Heart right ventricle (tissue), 16 donors: ENCODE measurements at regions of chr7 and their contacts with region 1.

Region 1: DNA sequence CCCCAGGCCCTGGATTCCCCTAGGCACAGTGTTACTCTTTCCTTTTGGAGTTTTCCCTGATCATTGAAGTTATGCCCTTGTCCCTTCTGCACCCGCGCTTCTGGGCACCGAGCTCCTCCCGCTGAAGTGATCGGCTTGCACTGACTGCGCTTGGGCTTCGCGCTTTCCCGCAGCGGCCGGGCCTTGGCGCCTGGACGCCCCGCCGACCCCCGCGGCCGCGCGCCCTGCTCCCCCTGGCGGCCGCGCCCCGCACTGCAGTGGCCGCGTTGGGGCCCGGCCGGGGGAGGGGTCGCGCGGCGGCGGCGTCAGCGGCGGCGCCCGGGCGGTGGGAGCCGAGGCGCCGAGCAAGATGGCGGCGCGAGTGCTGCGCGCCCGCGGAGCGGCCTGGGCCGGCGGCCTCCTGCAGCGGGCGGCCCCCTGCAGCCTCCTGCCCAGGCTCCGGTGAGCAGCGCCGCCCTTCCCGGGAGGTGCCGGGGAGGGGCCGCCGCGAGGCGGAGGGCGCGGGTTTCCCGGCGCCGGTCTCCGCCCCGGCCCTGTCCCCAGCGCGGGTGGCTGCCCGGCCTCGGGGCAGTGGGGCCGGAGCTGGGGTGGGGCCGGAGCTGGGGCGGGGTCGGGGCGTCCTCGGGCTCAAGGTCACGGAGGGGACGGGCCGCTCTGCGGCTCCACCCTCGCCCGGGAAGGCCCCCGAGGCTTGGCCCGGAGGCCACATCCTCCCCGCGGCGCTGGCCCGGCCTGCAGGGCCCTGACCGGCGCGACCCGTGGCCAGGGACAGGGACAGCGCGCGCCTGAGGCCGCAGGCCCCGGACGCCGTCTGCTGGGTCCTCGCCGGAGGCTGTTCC is at the start of gene NIPSNAP2:
- DNase-seq: peak; percentile 86 to 91
- ATAC-seq: peak; percentile 93 to 96 (median 94)
- H3K4me3 ChIP-seq: peak within 1 kb of the TSS; percentile 26 to 80 (median 62)
- H3K27ac ChIP-seq: peak within 1 kb of the TSS; percentile 85 to 99 (median 98)
- H3K4me1 ChIP-seq: peaks cover 3 to 52% (median 28%) of the 10 kb centered on the region in 9 donors
- H3K27me3 ChIP-seq: no peaks in the 10 kb centered on the region
- CTCF ChIP-seq: peak; percentile 30 to 71 (median 55)
- total RNA-seq, gene NIPSNAP2: 221 to 455 (median 348) TPM

Region 2: GRCh38 chr7:55641273-55641691 is 323.2 kb before region 1 on chr7:
- intact Hi-C with region 1: loop called in 5 of 10 experiments (anchors 1 to 10 kb)
- DNase-seq: peak in 1 of 2 donors; percentile 51
- ATAC-seq: peak; percentile 75 to 96 (median 88)
- H3K4me3 ChIP-seq: no peak overlapping the region
- H3K27ac ChIP-seq: no peak overlapping the region
- H3K4me1 ChIP-seq: peaks cover 0 to 7% (median 0%) of the 10 kb centered on the region in 9 donors
- H3K27me3 ChIP-seq: no peaks in the 10 kb centered on the region
- CTCF ChIP-seq: peak; percentile 55 to 85 (median 80)

Region 3: DNA sequence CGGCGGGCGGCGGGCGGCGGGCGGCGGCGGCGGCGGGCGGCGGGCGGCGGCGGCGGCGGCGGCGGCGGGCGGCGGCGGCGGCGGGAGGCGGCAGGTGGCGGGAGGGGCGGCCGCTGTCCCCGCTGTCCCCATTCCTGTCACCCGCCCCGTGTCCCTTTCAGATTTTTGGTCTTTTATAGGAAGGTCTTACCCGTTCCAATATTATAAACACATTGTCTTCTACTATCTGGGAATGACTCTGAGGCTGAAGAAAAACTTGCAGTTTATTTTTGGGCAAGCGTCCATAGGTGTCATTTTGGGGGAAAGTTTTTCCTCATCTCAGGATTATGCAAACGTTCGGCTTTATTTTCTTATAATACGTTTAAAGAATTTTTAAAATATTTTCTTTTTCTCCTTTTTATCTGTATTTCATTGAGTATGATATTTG is 76.6 kb before region 1 on chr7:
- intact Hi-C with region 1: loop called in 3 of 10 experiments (anchors 5 to 10 kb)
- DNase-seq: no peak
- ATAC-seq: no peak
- H3K4me3 ChIP-seq: peak overlapping the region; percentile 25 to 66 (median 54)
- H3K27ac ChIP-seq: peak overlapping the region in 9 of 10 donors; percentile 37 to 81 (median 69)
- H3K4me1 ChIP-seq: peaks cover 0 to 12% (median 0%) of the 10 kb centered on the region in 9 donors
- H3K27me3 ChIP-seq: no peaks in the 10 kb centered on the region
- CTCF ChIP-seq: no peak

Region 4: DNA sequence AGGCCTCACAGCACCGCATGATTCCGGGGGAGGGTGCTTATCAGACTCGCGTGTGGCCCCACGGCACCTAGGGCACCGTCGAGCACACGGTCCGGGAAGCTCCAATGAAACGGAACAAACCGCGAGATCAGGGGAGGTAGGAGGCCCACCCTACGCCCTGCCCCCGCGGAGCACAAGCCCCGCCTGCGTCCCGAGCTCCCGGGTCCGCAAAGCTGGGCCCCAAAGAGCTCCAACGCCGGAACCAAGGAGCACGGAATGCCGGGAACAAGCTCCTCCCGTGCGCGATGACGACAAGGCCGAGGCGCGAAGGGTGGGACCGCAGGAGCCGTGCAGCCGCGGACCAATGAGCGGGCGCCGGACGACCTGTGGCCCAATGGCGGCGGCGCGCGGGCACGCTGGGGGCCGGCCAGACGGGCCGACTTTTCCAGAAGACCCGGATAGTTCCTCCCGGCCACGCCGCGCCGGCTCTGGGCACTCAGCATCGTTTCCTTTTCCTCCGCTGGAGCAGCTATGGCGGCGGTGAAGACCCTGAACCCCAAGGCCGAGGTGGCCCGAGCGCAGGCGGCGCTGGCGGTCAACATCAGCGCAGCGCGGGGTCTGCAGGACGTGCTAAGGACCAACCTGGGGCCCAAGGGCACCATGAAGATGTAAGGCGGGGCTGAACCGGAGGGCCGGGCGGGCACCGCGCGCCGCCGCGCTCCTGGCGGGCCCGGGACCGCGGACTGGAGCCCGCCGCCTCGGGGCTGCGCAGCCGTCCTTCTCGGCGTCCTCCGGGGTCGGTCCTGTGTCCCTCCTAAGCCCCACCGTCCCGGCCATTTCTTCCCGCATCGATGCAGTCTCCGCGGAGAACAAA is 87.1 kb after region 1 on chr7 and contains the starts of genes CCT6A and PSPH:
- intact Hi-C with region 1: loop called in 1 of 10 experiments (anchors 5 kb)
- DNase-seq: peak; percentile 98
- ATAC-seq: peak; percentile 99 to 100 (median 99)
- H3K4me3 ChIP-seq: peak within 1 kb of the TSS; percentile 63 to 98 (median 82)
- H3K27ac ChIP-seq: peak within 1 kb of the TSS; percentile 77 to 95 (median 91)
- H3K4me1 ChIP-seq: peaks cover 6 to 57% (median 28%) of the 10 kb centered on the region in 9 donors
- H3K27me3 ChIP-seq: no peaks in the 10 kb centered on the region
- CTCF ChIP-seq: no peak
- total RNA-seq, gene CCT6A: 53.5 to 74.8 (median 66.2) TPM
- total RNA-seq, gene PSPH: 7.5 to 14.7 (median 9.8) TPM

Region 5: GRCh38 chr7:56063882-56064625 is 99.6 kb after region 1 on chr7 and contains the start of gene SUMF2:
- intact Hi-C with region 1: loop called in 1 of 10 experiments (anchors 5 kb)
- DNase-seq: peak; percentile 93 to 94
- ATAC-seq: peak; percentile 99 to 100 (median 99)
- H3K4me3 ChIP-seq: peak within 1 kb of the TSS; percentile 53 to 95 (median 86)
- H3K27ac ChIP-seq: peak within 1 kb of the TSS; percentile 39 to 95 (median 89)
- H3K4me1 ChIP-seq: peaks cover 0 to 32% (median 11%) of the 10 kb centered on the region in 9 donors
- H3K27me3 ChIP-seq: no peaks in the 10 kb centered on the region
- CTCF ChIP-seq: peak in 6 of 9 donors; percentile 13 to 53 (median 38)
- total RNA-seq, gene SUMF2: 20.8 to 49.2 (median 32.6) TPM